Activated naive CD4-positive, alpha-beta T cell treated with anti-CD3 and anti-CD28 coated beads, Interleukin-2, amount 10 ng/mL, durations not matched to agents 7 days and 5 days (primary cell): ENCODE measurements at regions of chr12 and their contacts with region 1.

Region 1: DNA sequence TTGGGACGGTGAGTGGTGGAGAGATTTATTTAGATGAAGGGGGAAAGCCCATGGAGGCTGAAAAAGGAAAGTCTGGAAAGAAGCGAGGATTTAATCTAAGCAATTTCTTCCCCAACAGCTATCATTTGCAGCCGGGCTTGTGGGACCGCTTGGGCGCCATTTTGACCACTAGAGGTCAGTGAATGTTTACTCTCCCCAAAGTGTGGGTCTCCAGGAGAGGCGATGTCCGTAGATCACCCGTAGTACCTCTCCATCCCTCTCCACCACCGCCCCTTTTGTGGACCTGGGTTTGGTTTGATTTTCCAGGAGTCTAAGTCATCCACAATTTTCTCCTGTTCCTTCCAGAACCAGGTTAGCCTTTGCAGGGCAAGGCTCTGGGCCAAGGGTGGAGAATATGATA is 91.2 kb upstream of the PARP11 start:
- DNase-seq: no peak
- H3K4me3 Mint-ChIP-seq: no peak overlapping the region
- H3K27ac Mint-ChIP-seq: no peak overlapping the region
- H3K4me1 Mint-ChIP-seq: peaks cover 21% of the 10 kb centered on the region
- H3K27me3 Mint-ChIP-seq: peaks cover 10% of the 10 kb centered on the region

Region 2: GRCh38 chr12:3293446-3294161 is 670.8 kb before region 1 on chr12:
- CTCF ChIA-PET with region 1: no interaction called
- DNase-seq: no peak
- H3K4me3 Mint-ChIP-seq: no peak overlapping the region
- H3K27ac Mint-ChIP-seq: no peak overlapping the region
- H3K4me1 Mint-ChIP-seq: no peaks in the 10 kb centered on the region
- H3K27me3 Mint-ChIP-seq: peaks cover 19% of the 10 kb centered on the region

Region 3: GRCh38 chr12:3896801-3897331 is 67.6 kb before region 1 on chr12:
- CTCF ChIA-PET with region 1: interaction called, 17 read pairs
- DNase-seq: no peak
- H3K4me3 Mint-ChIP-seq: peak overlapping the region; percentile 31
- H3K27ac Mint-ChIP-seq: peak overlapping the region; percentile 96
- H3K4me1 Mint-ChIP-seq: peaks cover 42% of the 10 kb centered on the region
- H3K27me3 Mint-ChIP-seq: no peaks in the 10 kb centered on the region

Region 4: GRCh38 chr12:3933074-3933818 is 31.2 kb before region 1 on chr12:
- CTCF ChIA-PET with region 1: interaction called, 10 read pairs
- DNase-seq: peak; percentile 38
- H3K4me3 Mint-ChIP-seq: peak overlapping the region; percentile 69
- H3K27ac Mint-ChIP-seq: peak overlapping the region; percentile 84
- H3K4me1 Mint-ChIP-seq: peaks cover 70% of the 10 kb centered on the region
- H3K27me3 Mint-ChIP-seq: peaks cover 31% of the 10 kb centered on the region

Region 5: DNA sequence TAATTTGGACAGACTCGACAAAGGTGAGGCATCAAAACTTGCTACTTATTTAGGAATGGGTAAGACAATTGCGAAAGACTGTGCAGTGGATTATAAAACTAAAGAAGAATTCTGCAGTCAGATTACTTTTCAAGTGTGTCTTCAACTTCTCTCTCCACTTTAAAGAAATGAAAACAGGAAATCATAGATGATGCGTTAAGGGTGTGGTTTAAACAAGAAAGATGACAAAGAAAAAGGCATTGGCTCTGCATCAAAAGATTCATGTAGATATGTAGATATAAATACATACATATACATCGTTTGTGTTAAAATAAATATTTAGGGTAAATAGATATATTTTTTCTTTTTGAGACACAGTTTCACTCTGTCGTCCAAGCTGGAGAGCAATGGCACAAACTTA is 16.7 kb before region 1 on chr12:
- CTCF ChIA-PET with region 1: interaction called, 11 read pairs
- DNase-seq: no peak
- H3K4me3 Mint-ChIP-seq: no peak overlapping the region
- H3K27ac Mint-ChIP-seq: peak overlapping the region; percentile 91
- H3K4me1 Mint-ChIP-seq: peaks cover 62% of the 10 kb centered on the region
- H3K27me3 Mint-ChIP-seq: peaks cover 4% of the 10 kb centered on the region

Region 6: GRCh38 chr12:3988519-3989448 is 24.3 kb after region 1 on chr12:
- CTCF ChIA-PET with region 1: interaction called, 24 read pairs
- DNase-seq: peak; percentile 50
- H3K4me3 Mint-ChIP-seq: no peak overlapping the region
- H3K27ac Mint-ChIP-seq: peak overlapping the region; percentile 88
- H3K4me1 Mint-ChIP-seq: peaks cover 24% of the 10 kb centered on the region
- H3K27me3 Mint-ChIP-seq: peaks cover 23% of the 10 kb centered on the region

Region 7: DNA sequence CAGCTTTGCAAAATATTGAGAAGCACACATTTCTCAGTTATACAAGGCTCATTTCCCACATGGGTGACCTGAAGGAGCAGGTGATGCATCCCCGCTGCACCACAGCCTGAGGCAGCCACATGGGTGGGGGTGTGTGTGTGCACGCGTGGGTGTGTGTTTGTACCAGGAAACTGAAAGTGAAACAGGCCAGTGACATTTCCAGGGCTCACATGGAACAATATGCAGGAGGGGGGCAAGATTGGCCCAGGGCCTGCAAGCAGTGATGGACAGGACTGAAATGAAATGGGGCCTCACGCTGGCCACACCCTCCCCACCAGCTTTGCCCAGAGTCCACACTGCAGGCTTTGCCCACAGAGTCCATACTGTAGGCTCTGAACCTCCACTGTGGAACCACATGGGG is 63.0 kb after region 1 on chr12:
- CTCF ChIA-PET with region 1: no interaction called
- DNase-seq: peak; percentile 75
- H3K4me3 Mint-ChIP-seq: peak overlapping the region; percentile 11
- H3K27ac Mint-ChIP-seq: no peak overlapping the region
- H3K4me1 Mint-ChIP-seq: peaks cover 45% of the 10 kb centered on the region
- H3K27me3 Mint-ChIP-seq: peaks cover 23% of the 10 kb centered on the region